ENCODE measurements at regions of chr2 and their contacts with region 1.

Region 1: DNA sequence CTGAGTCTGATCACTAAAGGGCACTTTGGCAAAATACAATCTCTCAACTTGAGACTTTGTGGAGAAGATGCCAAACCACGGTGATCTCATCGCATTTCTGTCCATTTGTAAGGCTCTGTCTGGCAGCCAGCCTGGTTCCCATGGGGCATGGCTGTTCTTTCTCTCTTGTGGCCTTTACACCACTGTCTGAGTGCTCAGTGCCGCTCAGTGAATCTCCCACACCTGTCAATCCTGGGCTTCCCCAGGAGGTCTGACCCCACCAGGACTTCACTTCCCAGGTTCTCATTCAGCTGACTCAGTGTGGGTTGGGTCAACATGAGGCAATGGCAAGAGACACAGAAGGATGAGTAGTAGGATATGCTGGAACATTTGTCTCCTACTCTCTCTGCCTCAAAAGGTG is 96.8 kb upstream of the TRIB2 start:
- DNase-seq: no peak
- ATAC-seq: no peak
- H3K4me3 Mint-ChIP-seq: no peak overlapping the region
- H3K27ac Mint-ChIP-seq: no peak overlapping the region
- H3K4me1 Mint-ChIP-seq: peaks cover 28% of the 10 kb centered on the region
- H3K27me3 Mint-ChIP-seq: peaks cover 6% of the 10 kb centered on the region
- CTCF ChIP-seq: no peak

Region 2: DNA sequence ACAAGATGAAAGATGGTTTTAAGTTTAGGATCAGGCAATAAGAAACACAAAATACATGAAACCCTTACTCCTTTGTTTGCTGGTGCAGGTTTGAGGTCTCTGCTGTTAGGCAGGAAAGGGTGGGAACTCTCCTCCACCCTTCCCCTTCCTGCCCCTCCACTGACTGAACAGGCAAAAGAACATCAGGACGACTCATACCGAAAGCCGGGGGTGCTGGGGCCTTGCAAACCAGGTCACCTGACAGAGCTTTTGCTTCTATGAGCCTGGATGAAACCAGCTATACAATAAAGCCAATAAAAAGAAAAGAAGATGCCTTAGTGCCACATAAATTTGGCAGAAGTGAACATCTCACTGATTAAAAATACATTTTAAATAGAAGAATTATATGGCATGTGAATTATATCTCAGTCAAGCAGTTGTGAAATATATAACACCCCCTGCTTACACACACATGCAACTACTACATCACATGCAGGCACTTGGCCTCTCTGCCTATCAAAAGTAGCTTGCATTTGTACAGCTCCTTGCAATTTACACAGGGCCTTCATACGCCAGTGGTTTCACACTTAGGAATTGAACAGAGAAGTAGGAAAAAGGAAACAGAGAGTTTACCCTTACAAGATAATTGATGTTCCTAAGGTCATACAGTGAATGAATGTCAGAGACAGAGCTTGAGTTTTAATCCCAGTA is 118.4 kb before region 1 on chr2:
- CTCF ChIA-PET with region 1: no interaction called
- POLR2A ChIA-PET with region 1: interaction called, 6 read pairs
- intact Hi-C with region 1: loop called (anchors 5 kb)
- DNase-seq: peak; percentile 33
- ATAC-seq: peak; percentile 90
- H3K4me3 Mint-ChIP-seq: peak overlapping the region; percentile 67
- H3K27ac Mint-ChIP-seq: peak overlapping the region; percentile 75
- H3K4me1 Mint-ChIP-seq: peaks cover 72% of the 10 kb centered on the region
- H3K27me3 Mint-ChIP-seq: peaks cover 6% of the 10 kb centered on the region
- CTCF ChIP-seq: no peak

Region 3: GRCh38 chr2:12543978-12544558 is 75.9 kb before region 1 on chr2:
- CTCF ChIA-PET with region 1: no interaction called
- POLR2A ChIA-PET with region 1: no interaction called
- intact Hi-C with region 1: no loop called
- DNase-seq: no peak
- ATAC-seq: peak; percentile 72
- H3K4me3 Mint-ChIP-seq: peak overlapping the region; percentile 42
- H3K27ac Mint-ChIP-seq: peak overlapping the region; percentile 84
- H3K4me1 Mint-ChIP-seq: peaks cover 39% of the 10 kb centered on the region
- H3K27me3 Mint-ChIP-seq: no peaks in the 10 kb centered on the region
- CTCF ChIP-seq: no peak

Region 4: DNA sequence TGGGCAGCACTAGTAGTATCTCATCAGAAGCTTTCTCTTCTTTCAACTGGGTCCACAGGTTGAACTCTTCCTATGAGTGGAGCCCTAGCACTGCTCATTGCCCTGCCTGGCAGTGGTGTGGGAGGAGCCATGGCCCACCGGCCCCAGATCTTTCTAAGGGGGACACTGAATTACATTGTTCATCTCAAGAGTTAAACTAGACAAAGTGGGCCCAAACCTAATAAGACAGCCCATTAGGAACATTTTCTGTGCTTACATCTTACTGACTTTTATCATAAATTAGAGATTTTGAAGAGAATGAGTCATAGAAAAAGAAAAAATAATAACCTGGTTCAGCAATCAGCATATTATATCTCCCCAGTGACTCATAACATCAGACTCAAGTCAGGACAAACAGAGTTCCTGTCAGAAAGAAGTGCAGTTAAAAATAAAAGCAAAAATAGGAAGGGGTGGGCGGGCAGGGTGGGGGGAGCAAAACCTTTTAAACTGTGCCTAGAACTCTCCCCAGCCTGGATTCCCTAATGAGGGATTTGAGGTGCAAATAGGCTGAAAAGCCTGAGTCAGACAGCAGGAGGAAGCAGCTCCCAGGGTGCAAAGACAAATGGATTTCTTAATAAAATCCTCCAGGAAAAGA is 64.8 kb before region 1 on chr2:
- CTCF ChIA-PET with region 1: no interaction called
- POLR2A ChIA-PET with region 1: no interaction called
- intact Hi-C with region 1: loop called (anchors 2 kb)
- DNase-seq: no peak
- ATAC-seq: peak; percentile 67
- H3K4me3 Mint-ChIP-seq: peak overlapping the region; percentile 25
- H3K27ac Mint-ChIP-seq: peak overlapping the region; percentile 64
- H3K4me1 Mint-ChIP-seq: peaks cover 53% of the 10 kb centered on the region
- H3K27me3 Mint-ChIP-seq: no peaks in the 10 kb centered on the region
- CTCF ChIP-seq: no peak

Region 5: DNA sequence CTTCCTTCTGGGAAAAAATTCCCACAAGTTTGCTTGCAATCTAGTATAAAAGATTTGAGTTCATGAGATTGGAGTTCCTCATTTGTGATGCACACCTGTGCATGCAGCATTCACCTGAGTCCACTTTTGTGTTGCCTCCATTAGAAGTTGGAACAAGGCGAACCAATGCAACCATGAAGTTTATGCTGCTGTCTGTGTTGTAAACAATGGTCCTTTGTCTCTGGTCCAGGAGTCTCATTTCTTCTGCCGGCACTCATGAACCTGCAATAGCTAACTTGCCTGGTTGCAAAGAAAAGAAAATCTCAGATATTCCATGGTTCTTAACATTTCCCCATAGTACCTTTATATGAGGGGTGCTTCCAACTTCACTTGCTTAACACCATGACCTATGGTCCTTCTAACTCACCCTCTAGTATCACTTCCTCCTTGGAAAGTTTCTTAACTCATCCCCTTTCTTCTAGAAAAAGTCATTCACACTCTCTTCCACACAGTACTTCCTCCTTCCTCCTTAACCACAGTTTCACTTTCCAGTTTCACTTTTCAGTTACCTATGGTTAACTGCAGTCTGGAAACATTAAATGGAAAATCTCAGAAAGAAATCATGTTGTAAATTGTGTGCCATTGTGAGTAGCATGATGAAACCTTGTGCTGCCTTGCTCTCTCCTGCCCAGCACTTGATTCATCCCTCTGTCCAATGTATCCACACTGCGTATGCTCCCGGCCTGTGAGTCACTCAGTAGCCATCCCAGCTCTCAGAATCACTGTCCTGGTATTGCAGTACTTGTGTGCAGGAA is 32.0 kb before region 1 on chr2:
- CTCF ChIA-PET with region 1: no interaction called
- POLR2A ChIA-PET with region 1: interaction called, 3 read pairs
- intact Hi-C with region 1: loop called (anchors 1 kb)
- DNase-seq: no peak
- ATAC-seq: peak; percentile 91
- H3K4me3 Mint-ChIP-seq: peak overlapping the region; percentile 36
- H3K27ac Mint-ChIP-seq: peak overlapping the region; percentile 70
- H3K4me1 Mint-ChIP-seq: peaks cover 56% of the 10 kb centered on the region
- H3K27me3 Mint-ChIP-seq: no peaks in the 10 kb centered on the region
- CTCF ChIP-seq: no peak

Region 6: GRCh38 chr2:14401873-14402272 is 1781.9 kb after region 1 on chr2:
- CTCF ChIA-PET with region 1: no interaction called
- POLR2A ChIA-PET with region 1: no interaction called
- intact Hi-C with region 1: no loop called
- DNase-seq: no peak
- ATAC-seq: no peak
- H3K4me3 Mint-ChIP-seq: no peak overlapping the region
- H3K27ac Mint-ChIP-seq: no peak overlapping the region
- H3K4me1 Mint-ChIP-seq: no peaks in the 10 kb centered on the region
- H3K27me3 Mint-ChIP-seq: no peaks in the 10 kb centered on the region
- CTCF ChIP-seq: no peak

Measured in activated B cell treated with CpG ODN at 0.5 μM for 24 hours (primary cell).